B cell (primary cell): ENCODE measurements at regions of chr15 and their contacts with region 1.

Region 1: DNA sequence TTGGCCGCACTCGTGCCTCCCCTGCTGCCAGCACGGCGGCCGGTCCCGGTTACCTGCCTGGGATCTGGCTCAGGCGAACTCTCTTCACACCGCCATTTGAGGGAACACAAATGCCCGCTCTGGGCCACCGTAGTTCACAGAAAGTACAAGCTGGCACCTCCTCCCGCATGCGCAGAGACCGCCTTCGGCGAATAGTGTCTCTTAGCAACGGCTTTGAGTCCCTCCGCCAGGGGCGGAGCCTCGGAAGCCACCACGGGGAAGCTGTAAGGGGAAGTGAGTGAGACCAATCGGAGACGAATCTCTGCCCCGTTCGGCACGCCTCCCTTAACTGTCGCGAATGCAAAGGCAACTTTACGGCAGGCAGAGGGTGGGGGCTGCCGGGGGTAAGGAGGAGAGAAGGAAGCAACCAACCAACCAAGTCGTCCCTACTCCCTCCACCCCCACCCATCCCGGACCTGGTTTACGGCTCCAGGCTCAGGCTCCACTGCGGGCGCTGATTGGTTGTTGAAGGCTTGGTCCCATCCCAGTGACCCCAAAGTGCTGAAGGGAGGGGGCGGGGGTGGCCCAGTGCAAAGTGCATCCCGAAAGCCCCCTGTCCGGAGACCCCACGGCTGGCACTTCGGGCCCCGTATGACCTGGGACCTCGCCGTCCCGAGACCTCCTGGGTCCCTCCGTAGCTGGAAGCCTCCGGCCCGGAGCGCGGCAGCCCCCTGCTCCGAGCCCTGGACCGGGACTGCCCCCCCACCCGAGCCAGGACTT is at the starts of genes ASB7 and LINS1:
- DNase-seq: peak; percentile 100
- ATAC-seq: peak; percentile 86
- H3K4me3 ChIP-seq: peak within 1 kb of the TSS; percentile 67 to 95 (median 92)
- H3K4me3 Mint-ChIP-seq: no peak within 1 kb of the TSS
- H3K27ac ChIP-seq: peak within 1 kb of the TSS; percentile 77 to 93
- H3K27ac Mint-ChIP-seq: no peak within 1 kb of the TSS
- H3K4me1 ChIP-seq: peaks cover 20% of the 10 kb centered on the region in 2 donors
- H3K4me1 Mint-ChIP-seq: peaks cover 42% of the 10 kb centered on the region
- H3K27me3 ChIP-seq: no peaks in the 10 kb centered on the region
- H3K27me3 Mint-ChIP-seq: no peaks in the 10 kb centered on the region
- CTCF ChIP-seq: no peak
- total RNA-seq, gene ASB7: 25.0 and 26.5 TPM in 2 replicates
- total RNA-seq, gene LINS1: 39.6 and 46.4 TPM in 2 replicates

Region 2: GRCh38 chr15:99250494-99251435 is 1351.5 kb before region 1 on chr15:
- CTCF ChIA-PET with region 1: no interaction called
- POLR2A ChIA-PET with region 1: no interaction called
- intact Hi-C with region 1: loop called (anchors 1 kb)
- DNase-seq: peak; percentile 97
- ATAC-seq: peak; percentile 97
- H3K4me3 ChIP-seq: peak overlapping the region; percentile 61 to 91 (median 81)
- H3K4me3 Mint-ChIP-seq: peak overlapping the region; percentile 96
- H3K27ac ChIP-seq: peak overlapping the region; percentile 70 to 81
- H3K27ac Mint-ChIP-seq: peak overlapping the region; percentile 92
- H3K4me1 ChIP-seq: peaks cover 18 to 30% of the 10 kb centered on the region in 2 donors
- H3K4me1 Mint-ChIP-seq: peaks cover 31% of the 10 kb centered on the region
- H3K27me3 ChIP-seq: no peaks in the 10 kb centered on the region
- H3K27me3 Mint-ChIP-seq: no peaks in the 10 kb centered on the region
- CTCF ChIP-seq: no peak

Region 3: DNA sequence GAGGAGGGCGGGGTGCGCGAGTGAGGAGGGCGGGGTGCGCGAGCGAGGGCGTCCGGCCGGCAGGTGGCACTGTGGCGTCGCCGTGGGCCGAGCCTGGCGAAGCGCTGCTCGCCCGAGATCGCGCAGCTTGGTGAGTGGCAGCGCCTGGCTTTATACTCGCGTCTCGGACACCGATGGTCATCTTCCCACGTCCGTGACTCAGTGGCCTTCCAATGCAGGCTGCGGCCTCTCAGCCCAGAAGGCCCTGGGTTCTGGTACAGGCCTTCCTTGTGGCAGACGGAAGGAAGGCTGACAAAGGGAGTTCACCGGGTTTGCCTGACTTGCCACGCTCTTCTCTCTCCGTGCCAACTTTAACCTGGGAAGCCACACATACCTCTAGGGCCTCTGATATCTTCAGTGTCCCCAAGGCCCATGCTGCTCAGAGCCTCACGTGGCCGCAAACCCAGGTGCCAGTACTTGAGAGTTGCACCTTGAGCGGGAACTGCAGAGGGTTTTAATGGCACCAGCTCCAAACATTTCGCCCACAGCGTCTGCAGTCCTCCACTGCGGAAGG is 673.7 kb before region 1 on chr15:
- CTCF ChIA-PET with region 1: interaction called, 5 read pairs
- POLR2A ChIA-PET with region 1: no interaction called
- intact Hi-C with region 1: loop called (anchors 2 kb)
- DNase-seq: peak; percentile 92
- ATAC-seq: peak; percentile 91
- H3K4me3 ChIP-seq: peak overlapping the region; percentile 44 to 72 (median 60)
- H3K4me3 Mint-ChIP-seq: peak overlapping the region; percentile 89
- H3K27ac ChIP-seq: peak overlapping the region; percentile 72 to 75
- H3K27ac Mint-ChIP-seq: peak overlapping the region; percentile 91
- H3K4me1 ChIP-seq: peaks cover 11 to 16% of the 10 kb centered on the region in 2 donors
- H3K4me1 Mint-ChIP-seq: peaks cover 10% of the 10 kb centered on the region
- H3K27me3 ChIP-seq: peaks cover 0 to 2% (median 0%) of the 10 kb centered on the region in 4 experiments
- H3K27me3 Mint-ChIP-seq: peaks cover 5% of the 10 kb centered on the region
- CTCF ChIP-seq: peak; percentile 61

Region 4: GRCh38 chr15:100572362-100572983 is 29.8 kb before region 1 on chr15:
- CTCF ChIA-PET with region 1: interaction called, 5 read pairs
- POLR2A ChIA-PET with region 1: no interaction called
- intact Hi-C with region 1: loop called (anchors 2 kb)
- DNase-seq: peak; percentile 39
- ATAC-seq: no peak
- H3K4me3 ChIP-seq: no peak overlapping the region
- H3K4me3 Mint-ChIP-seq: no peak overlapping the region
- H3K27ac ChIP-seq: no peak overlapping the region
- H3K27ac Mint-ChIP-seq: no peak overlapping the region
- H3K4me1 ChIP-seq: no peaks in the 10 kb centered on the region
- H3K4me1 Mint-ChIP-seq: peaks cover 4% of the 10 kb centered on the region
- H3K27me3 ChIP-seq: no peaks in the 10 kb centered on the region
- H3K27me3 Mint-ChIP-seq: no peaks in the 10 kb centered on the region
- CTCF ChIP-seq: peak; percentile 75

Region 5: DNA sequence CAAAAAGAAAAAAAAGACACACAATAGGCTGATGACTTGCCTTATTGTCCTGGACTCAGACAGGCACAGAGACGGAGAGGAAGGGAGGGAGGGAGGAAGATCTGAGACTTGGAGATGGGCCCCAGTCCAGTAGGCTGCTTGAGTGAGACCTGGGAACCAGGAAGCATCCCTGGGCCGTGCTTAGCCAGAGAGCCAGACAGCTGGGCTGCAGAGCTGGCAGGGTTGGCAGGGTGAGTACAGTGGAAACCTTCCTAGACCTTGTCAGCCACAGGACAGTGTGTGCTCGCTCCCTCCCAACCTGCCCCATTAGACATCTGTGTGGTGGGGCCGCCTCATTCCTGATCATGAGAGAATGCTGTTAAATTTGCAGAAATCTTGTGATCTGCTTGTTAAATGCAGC is 169.5 kb after region 1 on chr15:
- CTCF ChIA-PET with region 1: no interaction called
- POLR2A ChIA-PET with region 1: no interaction called
- intact Hi-C with region 1: no loop called
- DNase-seq: no peak
- ATAC-seq: no peak
- H3K4me3 ChIP-seq: no peak overlapping the region
- H3K4me3 Mint-ChIP-seq: no peak overlapping the region
- H3K27ac ChIP-seq: no peak overlapping the region
- H3K27ac Mint-ChIP-seq: no peak overlapping the region
- H3K4me1 ChIP-seq: no peaks in the 10 kb centered on the region
- H3K4me1 Mint-ChIP-seq: no peaks in the 10 kb centered on the region
- H3K27me3 ChIP-seq: peaks cover 0 to 2% (median 0%) of the 10 kb centered on the region in 4 experiments
- H3K27me3 Mint-ChIP-seq: peaks cover 7% of the 10 kb centered on the region
- CTCF ChIP-seq: no peak

Region 6: DNA sequence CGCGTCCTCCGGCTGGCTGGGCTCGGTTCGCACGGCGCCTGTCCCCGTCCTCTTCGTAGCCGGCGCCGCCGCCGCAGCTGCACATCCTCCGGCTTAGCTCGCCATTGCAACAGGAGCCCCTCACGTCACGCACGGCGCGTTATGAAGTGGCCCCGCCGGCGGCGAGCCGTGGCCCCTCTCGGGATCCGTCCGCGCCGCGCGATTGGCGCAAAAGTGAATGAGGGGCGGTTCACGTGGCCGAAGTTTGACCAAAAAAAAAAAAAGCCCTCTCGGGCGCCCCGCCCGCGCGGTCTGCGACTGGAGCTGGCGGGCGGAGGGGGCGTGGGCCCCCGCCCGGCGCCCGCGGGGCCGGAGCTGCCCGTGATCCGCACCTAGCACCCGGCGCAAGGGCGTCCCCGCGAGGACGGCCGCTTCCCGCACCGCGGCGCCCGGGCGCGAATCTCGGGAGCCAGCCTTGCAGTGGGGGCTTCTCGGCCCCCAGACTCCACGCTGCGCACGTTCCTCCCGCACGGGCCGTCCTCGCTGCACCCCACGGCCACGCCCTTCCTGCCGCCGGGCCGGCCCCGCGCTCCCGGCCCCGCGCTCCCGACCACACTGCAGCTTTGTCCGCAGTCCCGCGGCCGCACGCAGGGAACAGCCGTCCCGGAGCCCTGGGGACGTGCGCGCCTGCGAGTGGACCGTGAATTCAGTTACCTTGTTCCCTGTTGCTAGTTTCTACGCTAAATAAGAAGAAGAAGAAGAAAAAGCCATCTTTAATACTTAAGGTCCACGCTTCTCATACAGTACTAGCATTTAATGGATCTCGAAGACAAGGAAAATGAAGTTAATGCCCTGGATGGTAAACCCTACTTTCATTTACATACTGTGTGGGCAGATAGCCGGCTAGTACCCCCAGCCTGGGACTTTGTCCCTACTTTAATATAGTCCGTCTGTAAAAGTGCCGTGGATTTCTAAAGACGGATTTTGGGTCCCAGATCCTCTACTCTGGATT is 649.9 kb after region 1 on chr15 and contains the start of gene CHSY1:
- CTCF ChIA-PET with region 1: no interaction called
- POLR2A ChIA-PET with region 1: no interaction called
- intact Hi-C with region 1: loop called (anchors 1 kb)
- DNase-seq: peak; percentile 96
- ATAC-seq: peak; percentile 81
- H3K4me3 ChIP-seq: peak within 1 kb of the TSS; percentile 50 to 81 (median 73)
- H3K4me3 Mint-ChIP-seq: peak within 1 kb of the TSS; percentile 93
- H3K27ac ChIP-seq: peak within 1 kb of the TSS; percentile 30 to 53
- H3K27ac Mint-ChIP-seq: peak within 1 kb of the TSS; percentile 97
- H3K4me1 ChIP-seq: peaks cover 29 to 31% of the 10 kb centered on the region in 2 donors
- H3K4me1 Mint-ChIP-seq: peaks cover 30% of the 10 kb centered on the region
- H3K27me3 ChIP-seq: peaks cover 0 to 4% (median 0%) of the 10 kb centered on the region in 4 experiments
- H3K27me3 Mint-ChIP-seq: no peaks in the 10 kb centered on the region
- CTCF ChIP-seq: no peak
- total RNA-seq, gene CHSY1: 18.9 and 20.3 TPM in 2 replicates